Ovary (tissue), 10 donors: ENCODE measurements at regions of chr7 and their contacts with region 1.

Region 1: GRCh38 chr7:35389657-35390056 is 135.8 kb upstream of the TBX20 start:
- DNase-seq: no peak
- H3K4me3 ChIP-seq: no peak overlapping the region
- H3K27ac ChIP-seq: no peak overlapping the region
- H3K4me1 ChIP-seq: no peaks in the 10 kb centered on the region
- H3K27me3 ChIP-seq: no peaks in the 10 kb centered on the region
- CTCF ChIP-seq: no peak
- EP300 ChIP-seq: no peak
- POLR2A ChIP-seq: no peak

Region 2: DNA sequence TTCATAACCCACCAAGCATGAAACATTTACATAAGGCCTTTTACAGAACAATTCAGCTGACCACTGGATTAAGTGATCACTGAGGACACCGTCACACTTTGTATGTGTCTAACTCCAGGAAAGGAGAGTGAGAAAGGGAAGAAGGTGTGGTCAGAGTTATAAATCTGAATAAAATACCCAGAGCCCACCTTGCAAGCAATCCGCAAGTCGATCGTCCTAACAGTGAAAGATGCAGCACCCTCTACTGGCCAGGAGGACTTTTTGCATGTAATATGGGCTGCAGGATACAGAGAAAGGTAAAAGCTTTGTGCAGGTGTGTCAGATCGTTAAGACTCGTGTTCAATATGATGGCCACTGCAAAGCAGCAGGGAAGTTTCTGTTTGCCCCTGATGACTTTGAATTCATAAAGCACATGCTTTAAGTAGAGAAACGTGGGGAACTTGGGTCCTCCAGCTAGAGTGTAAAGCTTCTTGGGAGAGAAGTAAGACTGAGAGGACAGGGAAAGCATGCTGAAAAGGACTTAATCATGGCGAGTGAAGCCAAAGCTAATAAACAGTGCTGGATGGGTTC is 1552.8 kb before region 1 on chr7:
- intact Hi-C with region 1: no loop called
- DNase-seq: no peak
- H3K4me3 ChIP-seq: no peak overlapping the region
- H3K27ac ChIP-seq: no peak overlapping the region
- H3K4me1 ChIP-seq: peaks cover 1% of the 10 kb centered on the region
- H3K27me3 ChIP-seq: no peaks in the 10 kb centered on the region
- CTCF ChIP-seq: no peak
- EP300 ChIP-seq: no peak
- POLR2A ChIP-seq: no peak

Region 3: GRCh38 chr7:34296663-34297062 is 1093.0 kb before region 1 on chr7:
- intact Hi-C with region 1: loop called in 1 of 4 experiments (anchors 5 kb)
- DNase-seq: no peak
- H3K4me3 ChIP-seq: no peak overlapping the region
- H3K27ac ChIP-seq: no peak overlapping the region
- H3K4me1 ChIP-seq: no peaks in the 10 kb centered on the region
- H3K27me3 ChIP-seq: no peaks in the 10 kb centered on the region
- CTCF ChIP-seq: no peak
- EP300 ChIP-seq: no peak
- POLR2A ChIP-seq: no peak

Region 4: GRCh38 chr7:35253710-35254495 is 135.8 kb before region 1 on chr7 and contains the start of gene TBX20:
- intact Hi-C with region 1: no loop called
- DNase-seq: no peak
- H3K4me3 ChIP-seq: peak within 1 kb of the TSS; percentile 2
- H3K27ac ChIP-seq: no peak within 1 kb of the TSS
- H3K4me1 ChIP-seq: peaks cover 5% of the 10 kb centered on the region
- H3K27me3 ChIP-seq: no peaks in the 10 kb centered on the region
- CTCF ChIP-seq: no peak
- EP300 ChIP-seq: no peak
- POLR2A ChIP-seq: no peak
- total RNA-seq, gene TBX20: 0.23 TPM in 1 of 7 donors, not detected in the others

Region 5: GRCh38 chr7:35313575-35313974 is 76.1 kb before region 1 on chr7:
- intact Hi-C with region 1: no loop called
- DNase-seq: peak in 2 of 5 donors; percentile 19 to 21
- H3K4me3 ChIP-seq: no peak overlapping the region
- H3K27ac ChIP-seq: no peak overlapping the region
- H3K4me1 ChIP-seq: no peaks in the 10 kb centered on the region
- H3K27me3 ChIP-seq: no peaks in the 10 kb centered on the region
- CTCF ChIP-seq: no peak
- EP300 ChIP-seq: no peak
- POLR2A ChIP-seq: no peak

Region 6: DNA sequence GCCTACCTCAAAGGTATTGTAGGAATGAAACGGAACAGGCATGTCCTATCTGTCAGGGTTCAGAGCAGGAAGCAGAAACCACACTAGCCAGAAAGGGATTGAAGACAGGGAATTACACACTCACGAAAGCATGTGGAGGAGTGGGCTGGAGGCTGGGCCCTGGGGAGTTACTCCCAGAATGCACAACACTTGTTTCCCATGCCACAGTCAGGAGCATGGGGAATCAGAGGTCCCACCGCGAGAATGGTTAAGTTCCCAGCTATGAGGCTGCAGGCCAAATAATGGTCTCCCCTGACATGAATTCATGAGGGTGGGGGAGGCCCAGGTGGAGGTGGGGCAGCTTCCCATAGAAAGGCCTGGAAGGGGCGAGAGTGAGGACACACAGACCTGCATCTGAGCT is 92.6 kb after region 1 on chr7:
- intact Hi-C with region 1: no loop called
- DNase-seq: no peak
- H3K4me3 ChIP-seq: no peak overlapping the region
- H3K27ac ChIP-seq: no peak overlapping the region
- H3K4me1 ChIP-seq: no peaks in the 10 kb centered on the region
- H3K27me3 ChIP-seq: no peaks in the 10 kb centered on the region
- CTCF ChIP-seq: no peak
- EP300 ChIP-seq: no peak
- POLR2A ChIP-seq: no peak